Activated naive CD8-positive, alpha-beta T cell treated with anti-CD3 and anti-CD28 coated beads, Interleukin-2, amount 10 ng/mL, durations not matched to agents 7 days and 5 days (primary cell): ENCODE measurements at regions of chr1 and their contacts with region 1.

Region 1: DNA sequence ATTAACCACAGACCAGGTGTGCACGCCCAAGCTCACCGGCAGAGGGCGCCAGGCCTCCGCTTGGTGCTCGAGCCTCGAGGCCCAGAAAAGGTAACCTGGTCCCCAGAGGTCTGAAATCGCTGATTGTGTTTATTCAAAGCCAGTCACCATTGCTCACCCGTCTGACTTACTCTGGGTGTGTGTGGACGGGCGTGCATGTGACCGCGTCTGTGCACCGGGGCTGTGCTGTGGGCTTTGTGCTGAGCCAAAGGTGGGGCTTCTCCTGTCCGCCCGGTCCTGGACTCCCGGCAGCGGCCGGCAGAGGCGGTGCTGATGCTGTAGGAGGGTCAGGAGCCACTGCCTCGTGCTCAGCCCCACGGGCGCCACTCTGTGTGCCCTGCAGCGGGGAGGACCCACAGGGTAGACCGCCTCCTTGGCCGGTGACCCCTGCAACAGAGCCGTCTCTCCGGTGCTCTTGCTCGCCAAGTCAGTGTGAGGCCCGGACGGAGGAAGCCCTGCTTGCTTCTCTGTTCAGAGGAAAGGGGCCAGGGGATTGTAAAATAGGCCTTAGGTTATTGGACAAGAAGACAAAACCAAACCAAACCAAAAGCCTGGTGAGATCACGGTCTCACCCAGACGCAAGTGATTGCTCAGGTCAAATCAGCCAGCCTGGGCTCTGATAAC is 32.0 kb upstream of the BTG2 start:
- DNase-seq: peak; percentile 95
- ATAC-seq: peak; percentile 69
- H3K4me3 Mint-ChIP-seq: peak overlapping the region; percentile 75
- H3K27ac Mint-ChIP-seq: peak overlapping the region; percentile 87
- H3K4me1 Mint-ChIP-seq: peaks cover 48% of the 10 kb centered on the region
- H3K27me3 Mint-ChIP-seq: no peaks in the 10 kb centered on the region

Region 2: GRCh38 chr1:203252678-203253077 is 20.7 kb before region 1 on chr1:
- POLR2A ChIA-PET with region 1: no interaction called
- DNase-seq: no peak
- ATAC-seq: no peak
- H3K4me3 Mint-ChIP-seq: no peak overlapping the region
- H3K27ac Mint-ChIP-seq: no peak overlapping the region
- H3K4me1 Mint-ChIP-seq: no peaks in the 10 kb centered on the region
- H3K27me3 Mint-ChIP-seq: peaks cover 45% of the 10 kb centered on the region

Region 3: GRCh38 chr1:203290261-203291089 is 17.1 kb after region 1 on chr1:
- POLR2A ChIA-PET with region 1: interaction called, 145 read pairs
- DNase-seq: peak; percentile 94
- ATAC-seq: peak; percentile 46
- H3K4me3 Mint-ChIP-seq: peak overlapping the region; percentile 82
- H3K27ac Mint-ChIP-seq: peak overlapping the region; percentile 98
- H3K4me1 Mint-ChIP-seq: peaks cover 60% of the 10 kb centered on the region
- H3K27me3 Mint-ChIP-seq: no peaks in the 10 kb centered on the region

Region 4: DNA sequence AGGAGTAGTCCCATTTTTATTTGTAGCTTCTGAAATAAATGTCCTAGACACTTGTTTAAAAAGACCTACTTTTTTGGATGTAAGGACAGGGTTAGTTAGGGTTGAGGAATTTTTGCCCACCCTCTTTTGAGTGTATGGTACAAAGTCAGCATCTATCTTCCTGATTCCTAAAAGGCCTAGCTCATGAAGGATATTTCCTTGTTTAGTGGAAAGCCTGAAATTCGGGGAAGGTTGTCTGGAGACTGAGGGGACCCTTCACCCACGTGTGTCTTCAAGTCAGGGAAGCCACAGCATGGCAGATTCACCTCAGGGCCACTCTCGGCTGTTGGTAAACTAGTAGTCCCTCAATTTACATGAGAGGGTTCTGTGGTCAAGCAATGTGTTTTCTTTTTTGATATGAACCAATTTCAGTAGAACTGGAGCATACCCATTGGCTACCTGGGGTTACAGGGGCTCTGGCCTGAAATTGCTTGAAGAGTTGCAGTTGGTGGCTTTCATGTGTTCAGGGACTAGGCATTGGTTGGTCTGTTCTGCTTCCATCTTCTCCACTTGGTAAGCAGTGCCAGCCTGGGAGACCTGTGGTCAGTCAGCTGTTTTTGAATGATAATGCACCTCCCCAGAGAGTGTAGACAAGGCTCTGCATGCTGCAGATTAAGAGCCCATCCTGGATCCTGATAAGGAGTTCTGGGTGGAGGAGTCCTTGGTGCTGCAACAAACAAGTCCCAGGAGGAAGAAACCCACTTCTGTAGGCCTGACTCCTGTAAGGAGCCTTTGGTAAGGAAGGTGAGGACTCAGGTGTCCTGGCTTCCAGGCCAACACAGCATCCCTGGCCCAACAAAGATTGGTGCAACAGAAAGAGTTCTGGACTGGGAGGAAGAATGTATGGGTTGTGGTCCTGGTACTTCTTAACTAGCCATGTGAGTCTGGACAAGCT is 38.3 kb after region 1 on chr1:
- POLR2A ChIA-PET with region 1: interaction called, 83 read pairs
- DNase-seq: no peak
- ATAC-seq: no peak
- H3K4me3 Mint-ChIP-seq: no peak overlapping the region
- H3K27ac Mint-ChIP-seq: peak overlapping the region; percentile 56
- H3K4me1 Mint-ChIP-seq: peaks cover 45% of the 10 kb centered on the region
- H3K27me3 Mint-ChIP-seq: no peaks in the 10 kb centered on the region

Region 5: GRCh38 chr1:203326830-203327683 is 53.7 kb after region 1 on chr1:
- POLR2A ChIA-PET with region 1: interaction called, 49 read pairs
- DNase-seq: peak; percentile 95
- ATAC-seq: peak; percentile 86
- H3K4me3 Mint-ChIP-seq: peak overlapping the region; percentile 74
- H3K27ac Mint-ChIP-seq: peak overlapping the region; percentile 90
- H3K4me1 Mint-ChIP-seq: peaks cover 50% of the 10 kb centered on the region
- H3K27me3 Mint-ChIP-seq: peaks cover 3% of the 10 kb centered on the region